Gastrocnemius medialis (tissue), 4 donors: ENCODE measurements at regions of chr21 and their contacts with region 1.

Region 1: GRCh38 chr21:46374761-46375389 is 50.9 kb downstream of the PCNT start:
- DNase-seq: peak; percentile 91 to 96
- ATAC-seq: peak; percentile 74 to 75
- H3K4me3 ChIP-seq: peak overlapping the region; percentile 27 to 57 (median 55)
- H3K27ac ChIP-seq: peak overlapping the region; percentile 97 to 99 (median 98)
- H3K4me1 ChIP-seq: peaks cover 43 to 46% of the 10 kb centered on the region in 2 donors
- H3K27me3 ChIP-seq: no peaks in the 10 kb centered on the region
- CTCF ChIP-seq: no peak
- POLR2A ChIP-seq: peak in 1 of 2 donors; percentile 26

Region 2: DNA sequence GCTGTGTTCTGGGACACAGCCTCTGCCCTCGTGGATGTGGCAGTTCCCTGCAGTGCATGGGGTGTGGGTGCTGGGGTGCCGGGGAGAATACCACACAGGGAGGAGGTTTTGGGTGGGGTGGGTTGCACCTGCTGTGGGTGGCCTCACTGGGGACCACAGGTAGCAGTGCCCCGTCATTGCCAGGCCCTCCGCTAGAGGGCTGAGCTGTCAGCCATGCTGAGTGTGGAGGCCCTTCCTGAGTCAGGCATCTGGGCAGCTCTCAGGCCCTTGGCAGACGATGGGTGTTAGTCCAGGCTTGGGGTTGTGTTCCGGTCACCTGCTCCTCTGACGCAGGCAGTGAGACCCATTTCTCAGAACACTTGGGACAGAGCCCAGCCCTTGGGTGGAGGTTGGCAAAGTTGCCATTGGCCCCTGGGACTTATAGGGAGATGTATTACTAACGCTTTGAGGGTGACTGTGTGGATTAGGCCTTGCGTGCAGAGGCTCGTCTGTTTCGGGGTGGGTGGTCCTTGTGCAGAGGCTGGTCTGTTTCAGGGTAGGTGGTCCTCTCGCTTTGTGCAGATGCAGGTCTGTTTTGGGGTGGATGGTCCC is 27.0 kb before region 1 on chr21:
- in situ Hi-C with region 1: no loop called
- intact Hi-C with region 1: loop called (anchors 1 kb)
- DNase-seq: peak; percentile 96 to 100
- ATAC-seq: peak; percentile 92 to 93
- H3K4me3 ChIP-seq: peak overlapping the region; percentile 58 to 77 (median 72)
- H3K27ac ChIP-seq: peak overlapping the region; percentile 87 to 99 (median 96)
- H3K4me1 ChIP-seq: peaks cover 16 to 47% of the 10 kb centered on the region in 2 donors
- H3K27me3 ChIP-seq: no peaks in the 10 kb centered on the region
- CTCF ChIP-seq: peak; percentile 85 to 96 (median 93)
- POLR2A ChIP-seq: peak in 1 of 2 donors; percentile 97

Region 3: GRCh38 chr21:46356494-46357334 is 18.2 kb before region 1 on chr21:
- in situ Hi-C with region 1: no loop called
- intact Hi-C with region 1: loop called (anchors 1 kb)
- DNase-seq: peak; percentile 71 to 83
- ATAC-seq: peak; percentile 25 to 32
- H3K4me3 ChIP-seq: peak overlapping the region in 2 of 4 donors; percentile 1 to 22
- H3K27ac ChIP-seq: peak overlapping the region; percentile 87 to 99 (median 96)
- H3K4me1 ChIP-seq: peaks cover 48 to 66% of the 10 kb centered on the region in 2 donors
- H3K27me3 ChIP-seq: no peaks in the 10 kb centered on the region
- CTCF ChIP-seq: peak in 1 of 5 experiments; percentile 24
- POLR2A ChIP-seq: no peak

Region 4: GRCh38 chr21:46392921-46393320 is 18.0 kb after region 1 on chr21:
- in situ Hi-C with region 1: no loop called
- intact Hi-C with region 1: loop called (anchors 1 kb)
- DNase-seq: peak in 1 of 2 donors; percentile 65
- ATAC-seq: peak in 1 of 2 donors; percentile 13
- H3K4me3 ChIP-seq: peak overlapping the region in 1 of 4 donors; percentile 13
- H3K27ac ChIP-seq: peak overlapping the region; percentile 94 to 98 (median 95)
- H3K4me1 ChIP-seq: peaks cover 36 to 44% of the 10 kb centered on the region in 2 donors
- H3K27me3 ChIP-seq: no peaks in the 10 kb centered on the region
- CTCF ChIP-seq: no peak
- POLR2A ChIP-seq: no peak